Activated B cell treated with CpG ODN at 0.5 μM for 24 hours (primary cell): ENCODE measurements at regions of chr14 and their contacts with region 1.

Region 1: DNA sequence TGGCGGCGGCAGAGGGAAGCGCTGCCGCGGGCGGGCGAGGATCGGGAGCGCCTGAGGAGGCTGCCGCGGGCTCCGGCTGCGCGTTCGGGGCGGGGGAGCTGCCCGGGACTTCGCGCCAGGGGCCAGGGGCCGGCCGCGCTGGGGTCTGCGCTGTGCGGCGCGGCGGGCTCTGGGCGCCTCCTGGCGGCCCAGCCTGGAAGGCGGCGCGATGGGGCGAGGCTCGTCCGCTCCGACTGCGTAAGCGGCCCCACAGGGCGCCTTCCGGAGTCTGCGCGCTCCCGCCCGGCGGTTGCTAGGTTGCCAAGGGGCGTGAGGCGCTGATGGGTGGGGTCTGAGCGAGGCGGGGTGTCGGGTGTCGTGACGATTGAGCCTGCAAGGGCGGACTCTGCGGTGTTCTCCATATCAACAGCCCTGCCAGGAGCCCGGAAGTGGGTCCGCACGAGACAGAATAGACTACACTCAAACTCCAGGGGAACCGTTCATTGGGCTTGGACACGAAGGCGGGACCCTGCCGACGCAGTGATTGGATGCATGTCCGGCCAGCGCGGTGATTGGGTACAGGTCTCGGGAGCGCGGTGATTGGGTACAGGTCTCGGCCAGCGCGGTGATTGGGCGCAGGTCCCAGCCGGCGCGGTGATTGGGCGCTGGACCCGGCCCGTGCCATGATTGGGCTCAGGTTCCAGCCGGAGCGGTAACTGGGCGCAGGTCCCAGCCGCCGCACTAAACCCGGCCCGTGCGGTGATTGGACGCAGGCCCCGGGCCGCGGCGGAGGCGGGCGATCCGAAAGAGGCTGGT is at the start of gene TEDC1:
- DNase-seq: peak; percentile 96
- ATAC-seq: peak; percentile 73
- H3K4me3 Mint-ChIP-seq: peak within 1 kb of the TSS; percentile 87
- H3K27ac Mint-ChIP-seq: peak within 1 kb of the TSS; percentile 97
- H3K4me1 Mint-ChIP-seq: peaks cover 33% of the 10 kb centered on the region
- H3K27me3 Mint-ChIP-seq: no peaks in the 10 kb centered on the region
- CTCF ChIP-seq: peak; percentile 57
- total RNA-seq, gene TEDC1: 16.7 and 18.1 TPM in 2 replicates

Region 2: GRCh38 chr14:104926619-104927431 is 563.9 kb before region 1 on chr14:
- CTCF ChIA-PET with region 1: no interaction called
- POLR2A ChIA-PET with region 1: no interaction called
- intact Hi-C with region 1: loop called (anchors 5 kb)
- DNase-seq: peak; percentile 60
- ATAC-seq: peak; percentile 58
- H3K4me3 Mint-ChIP-seq: peak overlapping the region; percentile 88
- H3K27ac Mint-ChIP-seq: peak overlapping the region; percentile 91
- H3K4me1 Mint-ChIP-seq: peaks cover 61% of the 10 kb centered on the region
- H3K27me3 Mint-ChIP-seq: no peaks in the 10 kb centered on the region
- CTCF ChIP-seq: no peak

Region 3: DNA sequence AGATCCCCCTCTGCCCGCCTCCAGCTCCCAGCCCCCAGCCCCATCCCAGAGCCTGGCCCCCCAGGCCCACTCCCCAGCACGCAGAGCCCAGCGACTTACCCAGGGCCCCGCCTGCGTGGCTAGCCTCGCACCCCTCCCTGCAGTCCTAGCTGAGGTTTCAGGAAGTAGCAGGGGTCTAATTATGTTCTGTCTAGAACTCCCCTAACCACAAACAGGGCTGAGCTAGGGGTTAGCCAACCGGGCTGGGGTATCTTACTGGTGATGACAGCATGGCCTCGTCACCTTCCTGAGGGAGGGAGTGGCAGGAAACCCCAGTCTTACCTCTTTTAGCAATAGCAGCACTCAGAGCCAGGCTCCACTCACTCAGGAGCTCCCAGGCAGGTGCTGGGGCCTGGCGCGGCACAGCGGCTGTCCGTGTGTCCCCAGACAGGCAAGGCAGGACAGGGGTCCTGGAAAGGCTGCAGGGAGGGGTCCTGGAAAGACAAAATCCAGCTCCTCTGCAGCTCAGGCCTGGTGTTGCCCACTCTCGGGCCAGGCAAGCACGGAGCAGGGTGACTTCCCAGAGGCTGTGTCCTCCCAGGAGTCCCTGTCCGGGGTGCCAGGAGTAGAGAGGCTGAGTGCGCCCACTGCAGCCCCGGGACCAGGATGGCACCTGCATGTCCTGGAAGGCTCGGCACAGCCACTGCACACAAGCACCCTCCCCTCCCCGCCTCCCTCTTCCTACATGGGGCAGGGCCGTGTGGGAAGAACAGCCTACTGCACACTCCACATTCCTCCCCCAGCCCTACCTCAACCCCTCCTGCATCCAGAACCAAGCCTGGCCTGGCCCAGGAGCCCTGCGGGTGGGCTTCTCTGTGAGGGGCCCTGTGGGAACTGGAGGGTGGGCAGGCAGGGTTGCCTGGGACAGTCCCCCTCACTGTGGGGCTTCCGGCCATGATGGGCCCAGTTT is 425.2 kb before region 1 on chr14 and contains the start of gene GPR132:
- CTCF ChIA-PET with region 1: interaction called, 4 read pairs
- POLR2A ChIA-PET with region 1: no interaction called
- intact Hi-C with region 1: loop called (anchors 1 kb)
- DNase-seq: peak; percentile 66
- ATAC-seq: peak; percentile 73
- H3K4me3 Mint-ChIP-seq: peak within 1 kb of the TSS; percentile 90
- H3K27ac Mint-ChIP-seq: peak within 1 kb of the TSS; percentile 89
- H3K4me1 Mint-ChIP-seq: peaks cover 88% of the 10 kb centered on the region
- H3K27me3 Mint-ChIP-seq: no peaks in the 10 kb centered on the region
- CTCF ChIP-seq: no peak
- total RNA-seq, gene GPR132: 43.4 and 48.5 TPM in 2 replicates

Region 4: DNA sequence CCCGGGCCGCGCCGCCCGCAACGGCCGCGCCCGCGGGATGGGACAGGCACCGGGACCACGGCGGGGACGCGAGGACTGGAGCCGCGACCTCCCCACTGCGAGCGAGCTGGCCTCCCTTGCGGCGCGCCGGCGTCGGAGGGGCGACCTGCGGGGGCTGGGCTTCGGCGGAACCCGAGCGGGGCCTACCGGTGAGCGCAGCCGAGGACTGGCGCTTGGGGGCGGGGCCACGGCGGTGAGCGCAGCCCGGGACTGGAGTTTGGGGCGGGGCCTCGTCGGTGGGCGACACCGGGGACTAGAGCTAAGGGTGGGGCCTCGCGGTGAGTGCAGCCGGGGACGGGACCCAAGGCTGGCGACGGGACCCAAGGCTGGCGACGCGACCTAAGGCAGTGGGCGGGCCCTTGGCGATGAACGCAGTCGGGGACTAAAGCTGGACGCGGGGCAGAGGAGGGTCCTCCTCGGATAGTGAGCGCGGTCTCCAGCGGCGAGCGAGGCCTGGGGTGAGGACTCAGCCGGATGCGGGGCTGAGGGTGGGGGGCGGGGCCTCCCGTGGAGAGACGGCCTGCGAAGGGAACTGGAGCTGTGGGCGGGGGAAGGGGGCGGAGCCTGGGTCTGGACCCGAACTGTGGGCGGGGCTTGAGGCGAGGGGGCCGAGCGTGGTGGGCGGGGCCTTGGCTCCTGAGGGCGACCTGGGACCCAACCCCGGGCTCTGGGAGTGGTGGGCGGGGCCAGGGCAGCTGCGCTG is 189.8 kb before region 1 on chr14 and contains the start of gene BRF1:
- CTCF ChIA-PET with region 1: no interaction called
- POLR2A ChIA-PET with region 1: interaction called, 8 read pairs
- intact Hi-C with region 1: loop called (anchors 1 kb)
- DNase-seq: peak; percentile 100
- ATAC-seq: peak; percentile 86
- H3K4me3 Mint-ChIP-seq: peak within 1 kb of the TSS; percentile 89
- H3K27ac Mint-ChIP-seq: peak within 1 kb of the TSS; percentile 89
- H3K4me1 Mint-ChIP-seq: peaks cover 13% of the 10 kb centered on the region
- H3K27me3 Mint-ChIP-seq: no peaks in the 10 kb centered on the region
- CTCF ChIP-seq: no peak
- total RNA-seq, gene BRF1: 28.7 and 32.8 TPM in 2 replicates

Region 5: GRCh38 chr14:105375635-105376057 is 115.1 kb before region 1 on chr14:
- CTCF ChIA-PET with region 1: interaction called, 104 read pairs
- POLR2A ChIA-PET with region 1: interaction called, 18 read pairs
- intact Hi-C with region 1: loop called (anchors 1 kb)
- DNase-seq: no peak
- ATAC-seq: peak; percentile 25
- H3K4me3 Mint-ChIP-seq: no peak overlapping the region
- H3K27ac Mint-ChIP-seq: no peak overlapping the region
- H3K4me1 Mint-ChIP-seq: peaks cover 11% of the 10 kb centered on the region
- H3K27me3 Mint-ChIP-seq: no peaks in the 10 kb centered on the region
- CTCF ChIP-seq: no peak

Region 6: GRCh38 chr14:105448706-105449111 is 42.1 kb before region 1 on chr14:
- CTCF ChIA-PET with region 1: interaction called, 18 read pairs
- POLR2A ChIA-PET with region 1: no interaction called
- intact Hi-C with region 1: loop called (anchors 1 kb)
- DNase-seq: peak; percentile 63
- ATAC-seq: peak; percentile 97
- H3K4me3 Mint-ChIP-seq: no peak overlapping the region
- H3K27ac Mint-ChIP-seq: no peak overlapping the region
- H3K4me1 Mint-ChIP-seq: no peaks in the 10 kb centered on the region
- H3K27me3 Mint-ChIP-seq: no peaks in the 10 kb centered on the region
- CTCF ChIP-seq: peak; percentile 20